ENCODE measurements at regions of chr10 and their contacts with region 1.

Region 1: DNA sequence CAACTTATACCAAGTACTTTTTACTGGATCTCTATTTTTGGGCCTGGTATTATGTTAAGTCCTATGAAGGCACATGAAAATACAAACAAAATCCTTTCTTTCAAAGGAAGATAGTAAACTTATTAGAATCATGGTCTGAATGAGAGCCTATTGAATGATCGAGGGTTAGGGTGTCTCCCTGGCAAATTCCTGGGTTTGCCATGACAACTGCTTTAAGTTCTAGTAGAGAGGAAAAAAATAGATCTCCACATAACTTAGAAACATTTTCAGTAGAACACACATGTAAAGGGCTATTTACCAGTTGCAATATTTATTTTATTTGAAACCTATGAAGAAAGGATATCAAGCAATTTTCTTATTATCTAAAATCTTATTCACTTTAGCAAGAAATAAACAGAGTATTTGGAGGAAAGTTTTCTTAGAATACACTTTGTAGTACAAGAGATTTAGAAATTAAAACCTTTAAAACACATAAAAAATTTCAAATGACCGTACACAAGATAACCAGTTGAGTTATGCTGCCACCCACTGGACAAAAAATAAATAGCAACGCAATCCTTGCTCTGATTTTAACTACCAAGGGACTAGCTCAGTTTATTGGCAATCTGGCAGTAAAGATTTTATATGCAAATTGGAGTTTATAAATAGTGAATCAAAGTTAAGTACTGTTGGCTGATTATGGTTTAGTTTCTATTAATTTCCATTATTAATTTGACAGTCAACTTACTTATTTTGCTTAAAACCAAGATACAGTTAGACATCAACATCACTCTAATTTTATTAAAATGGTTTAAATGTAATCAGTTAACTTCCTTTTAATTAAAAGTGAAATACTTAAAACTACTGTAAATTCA is 33.9 kb downstream of the CACUL1 start:
- DNase-seq: no peak
- H3K4me3 ChIP-seq: no peak overlapping the region
- H3K27ac ChIP-seq: no peak overlapping the region
- H3K4me1 ChIP-seq: peaks cover 0 to 8% (median 1%) of the 10 kb centered on the region in 3 donors
- H3K27me3 ChIP-seq: no peaks in the 10 kb centered on the region
- CTCF ChIP-seq: peak; percentile 58 to 88 (median 80)
- POLR2A ChIP-seq: no peak

Region 2: GRCh38 chr10:118568327-118568848 is 152.5 kb before region 1 on chr10:
- intact Hi-C with region 1: loop called (anchors 5 kb)
- DNase-seq: no peak
- H3K4me3 ChIP-seq: no peak overlapping the region
- H3K27ac ChIP-seq: peak overlapping the region in 1 of 4 donors; percentile 32
- H3K4me1 ChIP-seq: peaks cover 0 to 55% (median 18%) of the 10 kb centered on the region in 3 donors
- H3K27me3 ChIP-seq: no peaks in the 10 kb centered on the region
- CTCF ChIP-seq: peak; percentile 54 to 89 (median 80)
- POLR2A ChIP-seq: no peak

Measured in esophagus squamous epithelium (tissue), 5 donors.